MCF 10A (cell line): ENCODE measurements at regions of chr11 and their contacts with region 1.

Region 1: DNA sequence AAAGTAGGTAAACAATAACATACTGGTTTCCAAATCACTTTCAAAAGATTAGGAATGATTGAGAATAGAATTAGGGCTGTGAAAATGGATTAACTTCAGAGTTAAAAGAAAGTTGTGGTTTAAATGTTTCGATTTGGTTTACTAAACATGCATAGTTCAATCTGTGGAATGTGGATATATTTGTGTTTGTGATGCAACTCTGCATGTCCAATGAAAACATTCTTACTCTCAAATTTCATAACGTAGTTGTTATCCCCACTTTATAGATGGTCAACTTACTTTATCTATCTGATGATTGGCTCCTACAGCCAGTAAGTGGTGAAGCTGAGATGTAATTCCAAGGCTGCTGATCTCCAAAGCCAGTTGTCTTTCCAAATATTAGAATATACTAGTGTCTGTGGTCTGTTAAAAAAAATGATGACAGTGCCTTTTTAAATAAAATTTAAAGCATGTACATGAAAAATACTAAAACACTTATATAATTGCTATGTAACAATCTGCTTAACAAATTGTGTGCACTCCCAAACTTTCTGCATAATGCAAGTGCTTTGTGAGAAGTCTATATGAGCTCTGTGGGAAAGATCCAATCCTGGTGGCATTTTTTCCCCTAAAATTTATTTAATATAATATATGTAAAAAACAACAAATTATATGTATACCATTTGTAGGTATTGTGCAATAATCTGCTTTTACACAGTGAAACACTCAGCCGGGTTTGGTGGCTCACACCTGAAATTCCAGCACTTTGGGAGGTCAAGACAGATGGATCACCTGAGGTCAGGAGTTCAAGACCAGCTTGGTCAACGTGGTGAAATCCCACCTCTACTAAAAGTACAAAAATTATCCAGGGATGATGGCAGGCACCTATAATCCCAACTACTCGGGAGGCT is 9.7 kb upstream of the SIK3 start:
- DNase-seq: peak; percentile 25
- H3K4me3 Mint-ChIP-seq: no peak overlapping the region
- H3K27ac Mint-ChIP-seq: no peak overlapping the region
- H3K4me1 Mint-ChIP-seq: no peaks in the 10 kb centered on the region
- H3K27me3 Mint-ChIP-seq: no peaks in the 10 kb centered on the region
- CTCF ChIP-seq: no peak

Region 2: GRCh38 chr11:116732271-116733042 is 375.5 kb before region 1 on chr11:
- CTCF ChIA-PET with region 1: interaction called, 5 read pairs
- POLR2A ChIA-PET with region 1: no interaction called
- intact Hi-C with region 1: loop called (anchors 1 kb)
- DNase-seq: peak; percentile 74
- H3K4me3 Mint-ChIP-seq: no peak overlapping the region
- H3K27ac Mint-ChIP-seq: no peak overlapping the region
- H3K4me1 Mint-ChIP-seq: peaks cover 7% of the 10 kb centered on the region
- H3K27me3 Mint-ChIP-seq: no peaks in the 10 kb centered on the region
- CTCF ChIP-seq: peak; percentile 87

Region 3: GRCh38 chr11:116787786-116788486 is 320.0 kb before region 1 on chr11 and contains the start of gene ZPR1:
- CTCF ChIA-PET with region 1: interaction called, 12 read pairs
- POLR2A ChIA-PET with region 1: no interaction called
- intact Hi-C with region 1: loop called (anchors 1 kb)
- DNase-seq: peak; percentile 58
- H3K4me3 Mint-ChIP-seq: peak within 1 kb of the TSS; percentile 92
- H3K27ac Mint-ChIP-seq: peak within 1 kb of the TSS; percentile 99
- H3K4me1 Mint-ChIP-seq: peaks cover 28% of the 10 kb centered on the region
- H3K27me3 Mint-ChIP-seq: no peaks in the 10 kb centered on the region
- CTCF ChIP-seq: no peak
- total RNA-seq, gene ZPR1: 82.5 and 105 TPM in 2 replicates

Region 4: DNA sequence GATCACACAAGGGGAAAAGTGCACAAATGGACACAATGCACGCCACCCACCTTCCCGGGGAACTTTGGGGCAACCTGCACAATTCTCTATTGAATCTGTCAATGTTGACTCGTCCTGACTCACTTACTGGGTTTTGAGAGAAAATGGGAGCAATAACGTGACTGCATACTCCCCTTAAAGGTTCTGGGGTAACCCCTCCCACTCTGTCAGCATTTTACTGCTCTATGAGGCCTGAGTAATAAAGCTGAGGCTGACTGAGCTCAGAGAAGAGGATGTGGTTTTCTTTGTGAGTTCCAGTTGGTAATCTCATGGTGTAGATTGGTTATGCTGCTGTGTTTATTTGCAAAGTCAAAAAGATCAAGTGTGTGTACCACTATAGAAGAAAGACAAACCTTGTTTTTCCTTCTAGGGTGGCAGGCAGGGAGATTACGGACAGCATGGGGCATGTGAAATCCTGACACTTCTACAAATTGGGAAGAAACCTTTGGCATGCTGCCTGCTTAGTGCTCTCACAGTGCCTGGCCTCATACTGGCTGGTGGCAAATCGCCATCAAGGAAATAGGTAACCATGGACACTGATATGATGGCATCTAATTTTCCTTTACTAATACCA is 254.4 kb before region 1 on chr11:
- CTCF ChIA-PET with region 1: interaction called, 11 read pairs
- POLR2A ChIA-PET with region 1: interaction called, 6 read pairs
- intact Hi-C with region 1: no loop called
- DNase-seq: peak; percentile 50
- H3K4me3 Mint-ChIP-seq: no peak overlapping the region
- H3K27ac Mint-ChIP-seq: no peak overlapping the region
- H3K4me1 Mint-ChIP-seq: peaks cover 18% of the 10 kb centered on the region
- H3K27me3 Mint-ChIP-seq: no peaks in the 10 kb centered on the region
- CTCF ChIP-seq: no peak

Region 5: DNA sequence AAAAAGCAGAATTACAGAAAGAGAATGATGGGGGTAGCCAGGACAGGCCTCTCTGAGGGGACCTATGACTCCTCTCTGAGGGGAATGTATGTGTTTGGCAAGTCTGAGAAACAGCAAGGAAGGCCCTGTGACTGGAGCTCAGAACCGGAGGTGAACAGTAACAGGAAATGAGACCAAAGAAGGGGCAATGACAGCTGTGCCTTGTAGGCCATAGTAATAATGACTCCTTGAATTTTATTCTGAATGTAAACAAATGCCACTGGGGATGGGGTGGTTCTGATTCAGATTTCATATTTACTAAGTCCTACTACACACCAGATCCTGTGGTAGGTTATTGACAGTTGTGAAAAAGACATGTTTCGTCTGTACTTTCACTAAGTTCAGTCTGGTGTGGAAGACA is 217.8 kb before region 1 on chr11:
- CTCF ChIA-PET with region 1: interaction called, 18 read pairs
- POLR2A ChIA-PET with region 1: no interaction called
- intact Hi-C with region 1: no loop called
- DNase-seq: no peak
- H3K4me3 Mint-ChIP-seq: no peak overlapping the region
- H3K27ac Mint-ChIP-seq: no peak overlapping the region
- H3K4me1 Mint-ChIP-seq: no peaks in the 10 kb centered on the region
- H3K27me3 Mint-ChIP-seq: no peaks in the 10 kb centered on the region
- CTCF ChIP-seq: no peak

Region 6: DNA sequence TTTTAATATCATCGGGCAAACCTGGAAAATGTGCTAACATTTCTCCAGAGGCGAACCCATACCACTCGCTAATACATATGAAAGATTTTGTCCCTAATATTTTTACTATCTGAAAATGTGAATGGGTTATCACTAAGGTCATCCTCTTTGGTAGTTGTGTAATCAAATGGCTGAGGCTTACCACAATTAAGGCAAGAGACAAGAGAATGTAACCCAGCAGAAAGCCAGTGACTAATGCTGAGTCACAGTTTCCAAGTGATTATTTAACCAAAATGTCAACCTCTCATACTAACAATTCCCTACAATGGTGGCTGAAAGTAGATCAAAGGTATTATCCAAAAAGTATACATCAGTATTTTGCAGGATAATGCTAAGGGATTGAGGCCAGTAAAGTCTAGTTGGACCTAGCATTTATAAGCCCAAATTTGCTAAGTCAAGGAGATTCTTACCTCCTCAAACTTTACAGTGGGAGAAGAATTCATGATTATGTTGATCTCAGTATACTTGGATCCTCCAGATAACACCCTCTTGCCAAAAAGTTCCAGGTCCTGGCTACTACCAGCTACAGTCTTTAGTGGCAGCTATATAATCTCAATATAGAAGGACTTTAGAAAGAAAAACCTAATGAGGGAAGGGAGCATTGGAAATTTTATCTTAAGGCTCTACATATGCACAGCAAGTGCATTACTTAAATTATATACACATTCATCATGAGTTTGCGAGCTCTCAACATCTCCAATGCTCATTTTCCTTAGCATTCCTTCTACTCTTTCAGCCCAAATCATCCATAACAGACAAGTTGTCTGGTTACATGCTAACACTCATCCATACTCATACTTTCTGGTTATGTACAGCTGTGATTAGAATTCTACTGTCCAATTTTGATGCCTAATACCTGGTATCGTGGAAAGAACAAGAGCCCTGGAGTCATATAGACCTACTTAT is 35.2 kb before region 1 on chr11:
- CTCF ChIA-PET with region 1: interaction called, 10 read pairs
- POLR2A ChIA-PET with region 1: interaction called, 3 read pairs
- intact Hi-C with region 1: no loop called
- DNase-seq: peak; percentile 92
- H3K4me3 Mint-ChIP-seq: no peak overlapping the region
- H3K27ac Mint-ChIP-seq: no peak overlapping the region
- H3K4me1 Mint-ChIP-seq: peaks cover 26% of the 10 kb centered on the region
- H3K27me3 Mint-ChIP-seq: no peaks in the 10 kb centered on the region
- CTCF ChIP-seq: no peak

Region 7: GRCh38 chr11:117226388-117227385 is 118.7 kb after region 1 on chr11:
- CTCF ChIA-PET with region 1: interaction called, 14 read pairs
- POLR2A ChIA-PET with region 1: no interaction called
- intact Hi-C with region 1: loop called (anchors 1 kb)
- DNase-seq: peak; percentile 86
- H3K4me3 Mint-ChIP-seq: no peak overlapping the region
- H3K27ac Mint-ChIP-seq: no peak overlapping the region
- H3K4me1 Mint-ChIP-seq: peaks cover 29% of the 10 kb centered on the region
- H3K27me3 Mint-ChIP-seq: no peaks in the 10 kb centered on the region
- CTCF ChIP-seq: peak; percentile 80